ENCODE measurements at regions of chr1 and their contacts with region 1.

Region 1: DNA sequence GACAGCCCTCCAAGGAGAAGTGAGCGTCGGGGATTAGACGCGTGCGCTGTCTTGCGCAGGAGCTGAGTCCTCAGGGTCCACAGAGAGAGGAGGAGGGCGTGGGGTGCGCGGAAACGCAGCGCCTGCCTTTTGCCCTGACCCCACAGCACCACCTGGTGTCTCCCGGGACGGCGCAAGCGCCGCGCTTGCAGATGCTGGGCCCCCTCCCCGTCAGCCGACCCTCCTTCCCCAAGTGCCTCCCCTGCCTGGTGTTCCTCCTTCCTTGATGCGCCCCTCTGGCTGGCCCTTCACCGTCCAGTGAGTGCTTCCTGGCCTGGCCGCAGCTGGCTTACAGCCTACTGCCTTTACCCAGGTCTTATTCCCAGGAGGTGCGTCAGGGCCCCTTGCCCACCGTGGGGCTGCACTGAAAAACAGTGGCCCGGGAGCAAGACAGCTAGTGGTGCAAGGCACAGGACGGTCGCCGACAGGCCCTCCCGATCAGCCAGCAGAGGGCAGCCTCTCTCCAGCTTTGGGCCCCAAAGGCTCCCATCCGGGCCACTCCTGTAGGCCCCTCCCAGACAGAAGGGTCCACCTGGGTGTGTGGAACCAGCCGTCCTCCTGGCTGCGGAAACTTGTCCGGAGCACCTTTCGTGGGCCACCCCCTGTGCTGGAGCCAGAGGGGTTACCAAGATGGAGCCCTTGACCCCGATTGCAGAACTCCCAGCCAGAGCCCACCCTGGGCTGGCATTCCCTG is 12.9 kb upstream of the PHLDA3 start:
- DNase-seq: peak; percentile 90
- ATAC-seq: peak; percentile 85 to 87

Region 2: GRCh38 chr1:201447911-201448871 is 33.7 kb before region 1 on chr1:
- intact Hi-C with region 1: loop called in 1 of 2 experiments (anchors 2 kb)
- DNase-seq: peak; percentile 84
- ATAC-seq: peak; percentile 82 to 83

Region 3: DNA sequence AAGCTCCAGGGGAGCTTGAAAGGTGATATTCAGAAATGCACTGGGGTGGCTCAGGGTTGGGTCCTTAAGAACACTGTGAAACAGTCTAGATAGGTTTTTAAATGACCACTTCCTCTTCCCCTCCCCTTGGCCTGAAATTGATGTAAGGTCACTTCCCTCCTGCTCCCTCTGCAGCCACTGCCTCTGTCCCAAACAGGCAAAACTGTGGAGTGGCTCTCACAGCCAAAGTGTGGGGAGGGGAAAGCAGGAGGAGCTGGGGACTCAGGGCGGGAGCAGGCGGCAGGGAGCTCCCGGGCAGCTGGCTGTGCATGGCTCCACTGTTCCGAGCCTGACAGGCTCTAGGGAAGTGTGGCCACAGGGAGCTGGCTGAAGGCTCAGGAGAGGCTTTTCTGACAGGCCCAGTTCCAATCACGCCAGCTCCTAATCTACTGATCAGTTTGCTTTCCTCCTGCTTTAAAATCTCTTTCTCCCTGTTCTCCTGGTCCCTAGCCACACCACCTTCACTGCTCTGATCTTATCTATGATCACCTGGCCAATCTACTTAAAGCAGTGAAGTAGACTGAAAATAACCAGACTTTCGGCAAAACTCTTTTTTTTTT is 30.1 kb after region 1 on chr1:
- intact Hi-C with region 1: loop called (anchors 1 to 2 kb)
- DNase-seq: peak; percentile 77
- ATAC-seq: peak; percentile 78 to 83

Measured in left cardiac atrium (tissue), 4 donors.